ENCODE measurements at regions of chr5 and their contacts with region 1.

Region 1: DNA sequence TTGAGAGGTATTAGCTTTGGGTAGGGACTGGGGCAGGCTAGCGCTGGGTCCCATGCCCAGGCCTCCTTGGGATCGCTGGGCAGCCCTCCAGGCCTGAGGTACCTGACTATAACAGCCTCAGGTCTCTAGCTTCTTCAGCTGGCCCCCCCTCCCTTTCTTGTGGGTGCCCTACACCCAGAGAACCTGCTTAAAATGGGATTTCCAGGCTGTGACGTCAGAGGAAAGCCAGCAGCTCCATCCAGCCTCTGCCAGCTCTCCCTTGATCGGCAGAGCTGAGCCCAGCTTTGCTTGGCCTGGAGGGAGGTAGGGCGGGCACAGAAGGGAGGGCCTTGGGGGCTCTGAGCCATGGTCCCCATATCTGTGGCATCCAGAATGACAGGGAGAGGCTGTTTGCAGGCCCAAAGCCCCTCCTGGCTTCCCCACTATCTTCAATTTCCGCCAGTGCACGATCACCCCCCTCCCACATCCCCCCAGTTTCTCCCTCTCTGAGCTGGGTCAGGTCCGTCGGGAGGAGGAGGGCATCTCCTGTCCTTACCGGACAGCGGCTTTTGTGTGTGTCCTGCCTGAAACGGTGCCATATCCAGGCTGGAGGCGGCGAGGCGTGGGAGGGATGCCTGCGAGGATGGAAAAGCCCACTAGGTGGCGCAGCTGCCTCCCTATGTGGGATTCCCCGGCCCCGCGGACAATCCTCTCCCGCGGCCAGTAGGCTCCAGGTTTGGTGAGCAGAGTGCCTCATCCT is 10.8 kb downstream of the REEP2 start:
- DNase-seq: peak; percentile 59 to 71 (median 63)
- H3K4me3 ChIP-seq: no peak overlapping the region
- H3K4me3 Mint-ChIP-seq: peak overlapping the region in 4 of 8 donors; percentile 9 to 69 (median 44)
- H3K27ac ChIP-seq: no peak overlapping the region
- H3K27ac Mint-ChIP-seq: peak overlapping the region in 5 of 7 donors; percentile 42 to 81 (median 73)
- H3K4me1 ChIP-seq: peaks cover 8% of the 10 kb centered on the region
- H3K4me1 Mint-ChIP-seq: peaks cover 7 to 13% (median 10%) of the 10 kb centered on the region in 4 donors
- H3K27me3 ChIP-seq: no peaks in the 10 kb centered on the region
- H3K27me3 Mint-ChIP-seq: peaks cover 2 to 4% of the 10 kb centered on the region in 2 donors

Region 2: DNA sequence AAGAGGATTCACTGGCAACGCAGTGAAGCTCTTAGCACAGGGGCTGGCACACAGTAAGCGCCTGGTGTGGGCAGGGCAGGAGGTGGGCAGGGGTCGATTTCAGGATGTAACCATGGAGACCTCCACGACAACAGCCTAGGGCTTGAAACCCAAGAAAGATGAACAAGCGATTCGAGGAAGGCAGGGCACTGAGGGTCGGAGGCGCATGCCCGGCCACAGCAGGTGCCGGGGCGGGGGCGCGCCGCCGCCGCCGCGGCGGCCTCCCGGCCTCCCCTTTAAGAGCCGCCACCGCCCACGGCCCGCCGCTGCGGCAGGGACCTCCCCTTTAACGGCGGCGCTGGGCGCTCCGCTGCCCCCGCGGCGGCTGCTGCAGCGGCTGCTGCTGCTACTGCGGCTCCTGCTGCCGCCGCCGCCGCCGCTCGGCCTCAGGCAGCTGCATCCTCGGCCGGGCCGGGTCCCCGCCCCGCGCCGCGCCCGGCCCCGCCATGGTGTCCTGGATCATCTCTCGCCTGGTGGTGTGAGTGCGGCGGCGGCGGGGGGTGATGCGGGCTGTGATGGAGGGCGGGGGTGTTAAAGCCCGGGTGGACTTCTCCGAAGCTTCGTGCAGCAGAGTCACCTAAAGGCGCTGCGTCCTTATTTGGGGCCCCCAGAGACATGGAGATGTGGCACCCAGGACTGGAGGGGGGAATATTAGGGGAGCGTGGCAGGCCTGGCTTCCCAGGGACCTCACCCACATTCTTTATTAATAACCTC is 10.8 kb before region 1 on chr5 and contains the start of gene REEP2:
- CTCF ChIA-PET with region 1: interaction called, 24 read pairs
- POLR2A ChIA-PET with region 1: interaction called, 6 read pairs
- intact Hi-C with region 1: no loop called
- DNase-seq: peak; percentile 43 to 61 (median 53)
- H3K4me3 ChIP-seq: peak within 1 kb of the TSS in 1 of 2 donors; percentile 54
- H3K4me3 Mint-ChIP-seq: peak within 1 kb of the TSS; percentile 82 to 91 (median 84)
- H3K27ac ChIP-seq: no peak within 1 kb of the TSS
- H3K27ac Mint-ChIP-seq: peak within 1 kb of the TSS in 6 of 7 donors; percentile 10 to 89 (median 76)
- H3K4me1 ChIP-seq: peaks cover 13% of the 10 kb centered on the region
- H3K4me1 Mint-ChIP-seq: peaks cover 7 to 22% (median 15%) of the 10 kb centered on the region in 4 donors
- H3K27me3 ChIP-seq: no peaks in the 10 kb centered on the region
- H3K27me3 Mint-ChIP-seq: peaks cover 0 to 2% of the 10 kb centered on the region in 2 donors
- total RNA-seq, gene REEP2: not detected

Region 3: DNA sequence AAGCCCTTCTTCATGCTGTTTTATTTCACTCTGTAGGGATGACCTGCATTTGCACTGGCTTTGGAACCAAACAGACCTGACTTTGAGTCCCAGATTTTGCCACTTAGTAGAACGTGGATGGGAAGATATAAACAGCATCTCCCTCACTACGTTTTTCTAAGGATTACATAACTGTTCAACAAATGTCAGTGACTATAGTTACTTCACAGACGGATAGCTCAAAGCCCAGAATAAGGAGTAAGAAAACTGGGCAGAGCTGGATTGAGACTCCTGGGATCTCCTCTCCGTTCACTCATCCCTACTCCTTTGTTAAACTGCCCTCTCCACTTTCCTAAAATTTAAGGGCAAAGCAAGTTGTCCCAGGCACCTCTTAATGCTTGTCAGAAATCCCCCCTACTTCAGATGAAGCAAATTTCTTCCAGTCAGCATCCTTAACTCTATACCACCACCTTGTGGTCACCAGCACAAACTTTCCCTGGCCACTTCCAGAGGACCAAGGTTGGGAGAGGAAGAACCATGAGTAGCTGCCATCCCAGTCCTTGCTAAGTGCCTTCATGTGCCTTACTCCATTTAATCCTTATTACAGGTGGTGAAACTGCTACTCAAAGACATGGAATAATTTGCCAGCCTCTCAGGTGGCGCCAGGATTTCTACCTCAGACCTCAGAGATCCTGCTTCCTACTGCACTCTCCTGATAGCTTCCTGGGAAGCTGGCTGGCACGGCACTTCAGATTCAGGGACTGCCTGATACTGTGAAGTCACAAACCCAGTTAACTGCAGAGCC is 54.0 kb after region 1 on chr5:
- CTCF ChIA-PET with region 1: interaction called, 507 read pairs
- POLR2A ChIA-PET with region 1: interaction called, 7 read pairs
- intact Hi-C with region 1: loop called (anchors 1 kb)
- DNase-seq: peak; percentile 47 to 57 (median 50)
- H3K4me3 ChIP-seq: no peak overlapping the region
- H3K4me3 Mint-ChIP-seq: no peak overlapping the region
- H3K27ac ChIP-seq: no peak overlapping the region
- H3K27ac Mint-ChIP-seq: peak overlapping the region in 4 of 7 donors; percentile 6 to 83 (median 42)
- H3K4me1 ChIP-seq: no peaks in the 10 kb centered on the region
- H3K4me1 Mint-ChIP-seq: peaks cover 0 to 4% (median 1%) of the 10 kb centered on the region in 4 donors
- H3K27me3 ChIP-seq: no peaks in the 10 kb centered on the region
- H3K27me3 Mint-ChIP-seq: peaks cover 0 to 1% of the 10 kb centered on the region in 2 donors

Region 4: GRCh38 chr5:138515556-138516245 is 66.0 kb after region 1 on chr5:
- CTCF ChIA-PET with region 1: interaction called, 31 read pairs
- POLR2A ChIA-PET with region 1: no interaction called
- intact Hi-C with region 1: no loop called
- DNase-seq: no peak
- H3K4me3 ChIP-seq: no peak overlapping the region
- H3K4me3 Mint-ChIP-seq: no peak overlapping the region
- H3K27ac ChIP-seq: no peak overlapping the region
- H3K27ac Mint-ChIP-seq: peak overlapping the region in 3 of 7 donors; percentile 10 to 70 (median 50)
- H3K4me1 ChIP-seq: no peaks in the 10 kb centered on the region
- H3K4me1 Mint-ChIP-seq: peaks cover 12 to 13% (median 12%) of the 10 kb centered on the region in 4 donors
- H3K27me3 ChIP-seq: no peaks in the 10 kb centered on the region
- H3K27me3 Mint-ChIP-seq: no peaks in the 10 kb centered on the region

Region 5: GRCh38 chr5:139262742-139263445 is 813.2 kb after region 1 on chr5:
- CTCF ChIA-PET with region 1: interaction called, 3 read pairs
- POLR2A ChIA-PET with region 1: no interaction called
- intact Hi-C with region 1: loop called (anchors 2 kb)
- DNase-seq: peak; percentile 46 to 62 (median 53)
- H3K4me3 ChIP-seq: no peak overlapping the region
- H3K4me3 Mint-ChIP-seq: no peak overlapping the region
- H3K27ac ChIP-seq: no peak overlapping the region
- H3K27ac Mint-ChIP-seq: peak overlapping the region in 3 of 7 donors; percentile 19 to 46 (median 30)
- H3K4me1 ChIP-seq: no peaks in the 10 kb centered on the region
- H3K4me1 Mint-ChIP-seq: peaks cover 1 to 5% (median 1%) of the 10 kb centered on the region in 4 donors
- H3K27me3 ChIP-seq: no peaks in the 10 kb centered on the region
- H3K27me3 Mint-ChIP-seq: peaks cover 2 to 5% of the 10 kb centered on the region in 2 donors